Mammary epithelial cell (primary cell): ENCODE measurements at regions of chr10 and their contacts with region 1.

Region 1: GRCh38 chr10:102596506-102596971 is 47.7 kb upstream of the TRIM8 start:
- DNase-seq: peak; percentile 57
- H3K4me3 ChIP-seq: no peak overlapping the region
- H3K27ac ChIP-seq: no peak overlapping the region
- H3K4me1 ChIP-seq: peaks cover 11% of the 10 kb centered on the region
- H3K27me3 ChIP-seq: no peaks in the 10 kb centered on the region
- CTCF ChIP-seq: peak; percentile 90

Region 2: GRCh38 chr10:102509387-102509786 is 87.2 kb before region 1 on chr10:
- CTCF ChIA-PET with region 1: no interaction called
- dilution Hi-C with region 1: loop called (anchors 5 kb)
- in situ Hi-C with region 1: no loop called
- intact Hi-C with region 1: no loop called
- DNase-seq: peak; percentile 45
- H3K4me3 ChIP-seq: no peak overlapping the region
- H3K27ac ChIP-seq: no peak overlapping the region
- H3K4me1 ChIP-seq: peaks cover 6% of the 10 kb centered on the region
- H3K27me3 ChIP-seq: no peaks in the 10 kb centered on the region
- CTCF ChIP-seq: no peak

Region 3: GRCh38 chr10:102549549-102549948 is 47.0 kb before region 1 on chr10:
- CTCF ChIA-PET with region 1: no interaction called
- dilution Hi-C with region 1: no loop called
- in situ Hi-C with region 1: no loop called
- intact Hi-C with region 1: no loop called
- DNase-seq: no peak
- H3K4me3 ChIP-seq: no peak overlapping the region
- H3K27ac ChIP-seq: no peak overlapping the region
- H3K4me1 ChIP-seq: no peaks in the 10 kb centered on the region
- H3K27me3 ChIP-seq: no peaks in the 10 kb centered on the region
- CTCF ChIP-seq: no peak

Region 4: GRCh38 chr10:102564209-102564834 is 32.2 kb before region 1 on chr10:
- CTCF ChIA-PET with region 1: no interaction called
- dilution Hi-C with region 1: loop called (anchors 5 kb)
- in situ Hi-C with region 1: no loop called
- intact Hi-C with region 1: no loop called
- DNase-seq: no peak
- H3K4me3 ChIP-seq: no peak overlapping the region
- H3K27ac ChIP-seq: no peak overlapping the region
- H3K4me1 ChIP-seq: no peaks in the 10 kb centered on the region
- H3K27me3 ChIP-seq: no peaks in the 10 kb centered on the region
- CTCF ChIP-seq: no peak

Region 5: GRCh38 chr10:102629661-102630614 is 33.4 kb after region 1 on chr10:
- CTCF ChIA-PET with region 1: no interaction called
- dilution Hi-C with region 1: loop called (anchors 5 kb)
- in situ Hi-C with region 1: no loop called
- intact Hi-C with region 1: no loop called
- DNase-seq: peak; percentile 71
- H3K4me3 ChIP-seq: no peak overlapping the region
- H3K27ac ChIP-seq: peak overlapping the region; percentile 40
- H3K4me1 ChIP-seq: peaks cover 75% of the 10 kb centered on the region
- H3K27me3 ChIP-seq: no peaks in the 10 kb centered on the region
- CTCF ChIP-seq: no peak